Activated CD4-positive, alpha-beta T cell treated with anti-CD3 and anti-CD28 coated beads for 36 hours (primary cell): ENCODE measurements at regions of chr5 and their contacts with region 1.

Region 1: DNA sequence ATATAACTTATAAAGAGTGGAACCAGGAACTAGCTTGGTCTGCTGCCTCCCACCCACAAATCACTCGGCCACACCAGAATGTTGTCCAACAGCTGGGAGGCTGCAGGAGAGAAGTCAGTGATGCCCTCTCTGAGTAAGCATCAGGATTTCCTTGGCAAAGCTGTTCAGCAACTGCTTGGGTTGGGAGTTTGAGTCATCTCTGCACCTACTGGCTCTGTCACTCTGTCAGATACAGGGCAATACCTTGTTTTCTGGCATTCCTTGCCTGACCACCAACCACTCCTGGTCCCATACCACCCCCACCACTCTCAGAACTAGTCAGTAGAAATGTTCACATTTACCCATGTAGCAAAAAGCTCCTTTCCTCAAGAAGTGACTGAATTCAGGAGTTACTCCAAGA is 36.8 kb upstream of the GCNT4 start:
- DNase-seq: peak; percentile 59
- ATAC-seq: peak; percentile 89
- H3K4me3 Mint-ChIP-seq: no peak overlapping the region
- H3K27ac Mint-ChIP-seq: no peak overlapping the region
- H3K4me1 Mint-ChIP-seq: peaks cover 19% of the 10 kb centered on the region
- H3K27me3 Mint-ChIP-seq: no peaks in the 10 kb centered on the region

Region 2: GRCh38 chr5:75167345-75167744 is 78.2 kb after region 1 on chr5:
- CTCF ChIA-PET with region 1: no interaction called
- POLR2A ChIA-PET with region 1: no interaction called
- intact Hi-C with region 1: no loop called
- DNase-seq: no peak
- ATAC-seq: no peak
- H3K4me3 Mint-ChIP-seq: no peak overlapping the region
- H3K27ac Mint-ChIP-seq: no peak overlapping the region
- H3K4me1 Mint-ChIP-seq: no peaks in the 10 kb centered on the region
- H3K27me3 Mint-ChIP-seq: no peaks in the 10 kb centered on the region

Region 3: DNA sequence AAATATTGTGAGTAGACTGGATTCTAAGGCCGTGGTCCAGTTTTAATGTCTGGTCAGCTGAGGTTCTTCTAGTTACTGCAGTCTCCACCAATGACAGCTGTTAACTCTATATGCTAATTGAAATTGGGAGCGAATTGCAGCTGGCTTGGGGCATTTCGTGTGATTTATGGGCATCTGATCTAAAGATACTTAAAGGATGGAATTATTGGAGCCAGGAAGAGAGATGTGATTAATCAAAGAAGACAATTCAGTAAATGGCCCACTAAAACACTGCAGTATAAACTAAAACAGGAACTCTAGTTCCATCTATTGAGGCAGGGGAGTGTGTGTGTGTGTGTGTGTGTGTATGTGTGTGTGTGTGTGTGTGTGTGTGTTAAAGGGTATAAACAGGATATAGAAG is 1156.5 kb after region 1 on chr5:
- CTCF ChIA-PET with region 1: no interaction called
- POLR2A ChIA-PET with region 1: no interaction called
- intact Hi-C with region 1: loop called in 1 of 2 experiments (anchors 10 kb)
- DNase-seq: no peak
- ATAC-seq: no peak
- H3K4me3 Mint-ChIP-seq: no peak overlapping the region
- H3K27ac Mint-ChIP-seq: no peak overlapping the region
- H3K4me1 Mint-ChIP-seq: no peaks in the 10 kb centered on the region
- H3K27me3 Mint-ChIP-seq: no peaks in the 10 kb centered on the region